Panc1 (cell line): ENCODE measurements at regions of chr1 and their contacts with region 1.

Region 1: GRCh38 chr1:20811916-20812315 is 24.8 kb upstream of the HP1BP3 start:
- DNase-seq: no peak
- ATAC-seq: no peak
- H3K4me3 ChIP-seq: no peak overlapping the region
- H3K27ac ChIP-seq: no peak overlapping the region
- H3K4me1 ChIP-seq: no peaks in the 10 kb centered on the region
- H3K27me3 ChIP-seq: no peaks in the 10 kb centered on the region
- CTCF ChIP-seq: no peak

Region 2: DNA sequence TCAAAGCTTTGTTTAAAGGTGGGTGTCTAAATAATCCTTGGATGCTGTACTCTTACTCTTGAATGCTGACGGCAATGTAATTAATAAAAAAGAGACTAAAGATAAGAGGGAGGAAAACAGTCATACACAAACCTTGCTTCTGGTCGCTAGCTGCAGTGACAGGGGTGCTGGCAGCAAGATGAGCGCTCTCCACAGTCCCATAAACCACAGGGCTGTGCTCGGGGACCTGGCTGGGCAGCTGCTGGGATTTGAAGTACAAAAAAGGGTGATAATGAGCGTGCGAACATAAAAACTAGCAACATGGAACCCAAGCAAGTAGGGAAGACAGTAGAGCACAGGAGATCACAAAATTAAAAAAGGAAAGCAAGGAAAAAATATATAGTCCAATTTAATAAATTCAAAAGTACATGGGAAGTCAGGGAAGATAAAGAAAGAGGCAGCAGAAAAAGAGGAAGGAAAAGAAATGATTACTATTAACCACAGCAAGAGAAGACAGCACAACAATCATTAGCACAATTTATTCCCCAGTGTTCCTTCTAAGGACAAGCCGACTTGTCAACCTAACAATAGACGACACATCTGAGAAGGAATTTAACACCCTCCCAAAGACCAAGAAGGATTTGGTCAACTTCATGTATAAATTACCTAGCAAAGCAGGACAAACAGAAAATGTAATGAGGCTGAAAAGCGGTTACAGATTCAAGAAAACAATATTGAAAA is 138.1 kb after region 1 on chr1:
- CTCF ChIA-PET with region 1: no interaction called
- POLR2A ChIA-PET with region 1: interaction called, 11 read pairs
- in situ Hi-C with region 1: no loop called
- intact Hi-C with region 1: no loop called
- DNase-seq: no peak
- ATAC-seq: no peak
- H3K4me3 ChIP-seq: no peak overlapping the region
- H3K27ac ChIP-seq: no peak overlapping the region
- H3K4me1 ChIP-seq: no peaks in the 10 kb centered on the region
- H3K27me3 ChIP-seq: no peaks in the 10 kb centered on the region
- CTCF ChIP-seq: no peak

Region 3: GRCh38 chr1:21508580-21509350 is 696.8 kb after region 1 on chr1:
- CTCF ChIA-PET with region 1: no interaction called
- POLR2A ChIA-PET with region 1: no interaction called
- in situ Hi-C with region 1: no loop called
- intact Hi-C with region 1: no loop called
- DNase-seq: no peak
- ATAC-seq: peak; percentile 91
- H3K4me3 ChIP-seq: peak overlapping the region; percentile 6 to 42; a peak in 3 of 4 replicates
- H3K27ac ChIP-seq: no peak overlapping the region
- H3K4me1 ChIP-seq: peaks cover 3% of the 10 kb centered on the region; the same call in 1 of the 2 replicates
- H3K27me3 ChIP-seq: no peaks in the 10 kb centered on the region
- CTCF ChIP-seq: peak; percentile 89